ENCODE measurements at regions of chr12 and their contacts with region 1.

Region 1: GRCh38 chr12:67648521-67649260 is at the start of gene DYRK2:
- DNase-seq: peak; percentile 66
- H3K4me3 Mint-ChIP-seq: peak within 1 kb of the TSS; percentile 75
- H3K27ac Mint-ChIP-seq: peak within 1 kb of the TSS; percentile 73
- H3K4me1 Mint-ChIP-seq: peaks cover 37% of the 10 kb centered on the region
- H3K27me3 Mint-ChIP-seq: peaks cover 4% of the 10 kb centered on the region
- total RNA-seq, gene DYRK2: 19.7 and 20.6 TPM in 2 replicates

Region 2: GRCh38 chr12:67355578-67356379 is 292.9 kb before region 1 on chr12:
- intact Hi-C with region 1: loop called (anchors 5 kb)
- DNase-seq: no peak
- H3K4me3 Mint-ChIP-seq: no peak overlapping the region
- H3K27ac Mint-ChIP-seq: no peak overlapping the region
- H3K4me1 Mint-ChIP-seq: peaks cover 24% of the 10 kb centered on the region
- H3K27me3 Mint-ChIP-seq: peaks cover 6% of the 10 kb centered on the region

Region 3: DNA sequence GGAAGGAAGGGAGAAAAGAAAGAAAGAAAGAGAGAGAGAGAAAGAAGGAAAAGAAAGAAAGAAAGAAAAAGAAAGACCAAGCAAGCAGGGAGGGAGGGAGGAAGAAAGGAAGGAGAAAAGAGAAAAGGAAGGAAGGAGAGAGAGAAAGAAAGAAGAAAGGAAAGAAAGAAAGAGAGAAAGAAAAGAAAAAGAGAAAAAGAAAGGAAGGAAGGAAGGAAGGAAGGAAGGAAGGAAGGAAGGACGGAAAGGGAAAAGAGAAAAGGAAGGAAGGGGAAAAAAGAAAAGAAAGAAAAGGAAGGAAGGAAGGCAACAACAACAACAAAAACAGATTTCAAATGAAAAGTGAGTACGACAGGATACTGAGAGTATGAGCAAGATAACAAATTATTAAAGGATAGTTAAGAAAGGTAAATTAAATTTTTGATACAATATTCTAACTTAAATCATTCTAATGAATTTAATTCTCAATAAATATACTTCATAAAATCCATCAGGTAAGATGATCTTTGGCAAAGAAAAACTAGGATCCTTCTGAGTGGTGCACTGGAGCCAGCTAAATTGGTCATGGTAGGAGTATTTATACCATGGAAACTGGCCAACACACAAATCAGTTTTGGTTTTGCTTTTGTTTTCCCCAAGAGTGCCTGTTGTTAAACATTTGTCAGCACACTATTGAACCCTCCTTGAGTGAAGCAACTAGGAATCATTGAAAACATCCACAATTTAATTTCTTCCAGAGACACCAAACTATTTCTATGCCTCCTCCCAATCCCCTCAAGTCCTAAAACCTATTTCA is 56.3 kb before region 1 on chr12:
- intact Hi-C with region 1: loop called (anchors 2 kb)
- DNase-seq: no peak
- H3K4me3 Mint-ChIP-seq: peak overlapping the region; percentile 51
- H3K27ac Mint-ChIP-seq: peak overlapping the region; percentile 83
- H3K4me1 Mint-ChIP-seq: peaks cover 34% of the 10 kb centered on the region
- H3K27me3 Mint-ChIP-seq: peaks cover 6% of the 10 kb centered on the region

Region 4: DNA sequence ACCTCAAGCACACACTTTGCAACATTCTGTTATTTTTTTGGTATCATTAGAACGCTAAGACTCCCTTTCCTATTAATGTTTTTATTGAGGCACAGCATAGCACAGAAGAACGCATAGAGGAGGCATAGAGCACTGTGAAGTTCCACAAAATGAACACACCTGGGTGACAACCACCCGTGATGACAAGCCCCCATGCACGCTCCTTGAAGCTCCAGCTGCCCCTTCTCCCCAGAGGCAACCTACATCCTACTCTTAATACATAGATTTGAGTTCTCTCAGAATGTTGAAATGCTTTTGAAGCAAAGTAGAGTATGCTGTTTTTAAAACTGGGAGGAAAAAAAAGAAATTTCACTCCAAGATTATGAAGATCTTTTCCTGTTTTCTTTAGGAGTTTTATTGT is 55.4 kb after region 1 on chr12:
- intact Hi-C with region 1: no loop called
- DNase-seq: no peak
- H3K4me3 Mint-ChIP-seq: no peak overlapping the region
- H3K27ac Mint-ChIP-seq: no peak overlapping the region
- H3K4me1 Mint-ChIP-seq: peaks cover 13% of the 10 kb centered on the region
- H3K27me3 Mint-ChIP-seq: peaks cover 59% of the 10 kb centered on the region

Region 5: DNA sequence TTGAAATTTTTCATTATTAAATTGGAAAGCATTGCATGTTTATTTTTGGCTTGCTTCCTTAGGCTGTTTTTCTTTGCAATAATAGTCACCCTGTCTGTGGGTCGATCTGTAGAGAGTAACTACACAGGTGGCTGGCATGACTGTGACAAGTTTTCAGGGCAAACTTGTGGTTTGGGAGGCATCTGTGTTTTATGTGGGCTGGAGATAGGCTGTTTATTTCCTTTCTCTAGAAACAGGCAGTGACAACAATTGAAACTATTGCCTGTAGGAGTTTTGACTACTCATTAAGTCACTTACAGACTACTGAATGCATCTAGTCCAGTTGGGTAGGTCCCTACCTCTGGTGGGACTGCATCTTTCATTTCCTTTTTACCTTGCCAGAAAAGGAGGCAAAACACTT is 155.5 kb after region 1 on chr12:
- intact Hi-C with region 1: loop called (anchors 5 kb)
- DNase-seq: peak; percentile 26
- H3K4me3 Mint-ChIP-seq: no peak overlapping the region
- H3K27ac Mint-ChIP-seq: no peak overlapping the region
- H3K4me1 Mint-ChIP-seq: peaks cover 29% of the 10 kb centered on the region
- H3K27me3 Mint-ChIP-seq: peaks cover 2% of the 10 kb centered on the region

Region 6: DNA sequence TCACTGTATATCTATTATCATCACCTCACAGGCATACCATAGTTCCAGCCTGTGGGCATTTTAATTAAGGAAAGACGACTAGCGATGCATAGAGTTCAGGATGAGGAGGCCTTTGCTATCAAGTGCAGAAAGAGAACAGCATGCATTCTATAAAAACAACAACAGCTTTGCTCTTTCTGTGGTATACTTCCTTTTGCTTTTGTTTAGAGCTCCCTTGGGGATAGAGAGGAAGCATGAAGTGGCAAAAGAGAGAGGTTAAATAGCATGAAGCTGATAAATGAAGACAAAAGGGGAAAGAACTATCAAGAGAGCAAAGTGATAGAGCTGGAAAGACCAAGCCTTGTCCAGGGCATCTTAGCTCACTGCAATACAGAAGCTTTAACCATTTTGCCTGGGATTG is 364.0 kb after region 1 on chr12:
- intact Hi-C with region 1: no loop called
- DNase-seq: no peak
- H3K4me3 Mint-ChIP-seq: no peak overlapping the region
- H3K27ac Mint-ChIP-seq: no peak overlapping the region
- H3K4me1 Mint-ChIP-seq: peaks cover 1% of the 10 kb centered on the region
- H3K27me3 Mint-ChIP-seq: no peaks in the 10 kb centered on the region